Esophagus muscularis mucosa (tissue), 4 donors: ENCODE measurements at regions of chr6 and their contacts with region 1.

Region 1: DNA sequence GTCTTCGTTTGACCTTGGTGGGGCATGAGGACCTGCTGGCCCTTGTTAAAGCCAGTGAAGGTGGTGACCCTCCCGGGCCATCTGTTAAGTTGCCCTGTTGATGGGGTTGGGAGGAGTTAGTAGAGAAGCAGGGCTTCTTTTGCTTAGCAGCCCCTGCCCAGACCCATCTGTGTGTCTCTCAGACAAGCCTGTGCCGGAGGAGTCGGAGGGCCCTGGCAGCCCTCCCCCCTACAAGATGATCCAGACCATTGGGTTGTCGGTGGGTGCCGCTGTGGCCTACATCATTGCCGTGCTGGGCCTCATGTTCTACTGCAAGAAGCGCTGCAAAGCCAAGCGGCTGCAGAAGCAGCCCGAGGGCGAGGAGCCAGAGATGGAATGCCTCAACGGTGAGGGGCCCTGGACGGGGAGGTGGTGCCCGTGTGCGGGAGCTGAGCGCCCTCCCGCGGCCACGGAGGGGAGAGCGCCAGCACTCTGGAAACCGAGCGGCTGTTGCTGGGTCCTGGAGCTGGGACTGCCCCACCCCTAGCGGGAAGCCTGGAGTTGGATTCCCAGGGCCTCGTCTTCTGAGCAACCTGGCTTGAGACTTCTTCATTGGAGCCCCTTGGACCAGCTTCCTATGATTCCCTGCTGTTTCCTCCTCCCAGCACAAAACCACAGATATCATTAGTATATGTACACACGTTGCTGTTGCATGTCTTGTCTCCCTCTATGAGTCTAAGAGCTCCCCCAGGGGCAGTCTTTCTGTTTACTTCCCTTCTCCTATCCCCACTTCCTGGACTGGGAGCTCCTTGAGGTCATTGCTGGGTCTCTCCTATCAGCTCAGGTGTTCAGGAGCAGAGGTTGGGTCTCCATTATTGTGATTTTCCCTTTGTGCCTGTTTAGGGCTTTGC is 27.6 kb upstream of the SRF start:
- DNase-seq: peak; percentile 94
- H3K4me3 ChIP-seq: no peak overlapping the region
- H3K27ac ChIP-seq: peak overlapping the region in 3 of 4 donors; percentile 2 to 64 (median 7)
- H3K4me1 ChIP-seq: peaks cover 10 to 14% (median 13%) of the 10 kb centered on the region in 4 donors
- H3K27me3 ChIP-seq: no peaks in the 10 kb centered on the region
- CTCF ChIP-seq: peak; percentile 93 to 97 (median 96)
- EP300 ChIP-seq: no peak
- POLR2A ChIP-seq: no peak

Region 2: DNA sequence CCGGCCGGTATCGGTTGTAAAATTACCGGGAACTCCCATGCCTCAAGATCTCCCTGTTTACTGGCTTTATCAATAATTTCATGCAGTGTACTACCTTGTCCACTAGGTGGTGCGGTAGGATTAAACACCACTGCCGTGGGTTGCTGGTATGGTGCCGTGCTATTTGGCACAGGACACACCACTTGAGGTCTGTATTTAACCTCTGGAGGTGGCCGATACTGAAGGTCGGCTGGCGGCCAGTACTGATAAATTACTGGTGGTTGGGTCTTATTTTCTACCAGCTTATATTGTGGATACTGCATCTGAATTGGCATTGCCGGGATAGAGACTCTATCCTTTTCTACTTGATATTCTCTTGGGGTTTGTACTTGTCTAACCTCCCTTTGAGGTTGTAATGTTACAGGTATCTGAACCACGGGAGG is 241.9 kb before region 1 on chr6:
- intact Hi-C with region 1: loop called (anchors 2 kb)
- DNase-seq: peak; percentile 94
- H3K4me3 ChIP-seq: peak overlapping the region in 1 of 4 donors; percentile 27
- H3K27ac ChIP-seq: no peak overlapping the region
- H3K4me1 ChIP-seq: peaks cover 9 to 12% (median 12%) of the 10 kb centered on the region in 4 donors
- H3K27me3 ChIP-seq: no peaks in the 10 kb centered on the region
- CTCF ChIP-seq: peak; percentile 90 to 93 (median 91)
- EP300 ChIP-seq: no peak
- POLR2A ChIP-seq: no peak

Region 3: GRCh38 chr6:43013843-43014433 is 129.5 kb before region 1 on chr6 and contains the starts of genes KLHDC3 and MEA1:
- intact Hi-C with region 1: loop called (anchors 5 kb)
- DNase-seq: peak; percentile 100
- H3K4me3 ChIP-seq: peak within 1 kb of the TSS; percentile 77 to 84 (median 81)
- H3K27ac ChIP-seq: peak within 1 kb of the TSS; percentile 85 to 87 (median 86)
- H3K4me1 ChIP-seq: peaks cover 46 to 58% (median 53%) of the 10 kb centered on the region in 4 donors
- H3K27me3 ChIP-seq: no peaks in the 10 kb centered on the region
- CTCF ChIP-seq: peak in 1 of 3 experiments; percentile 20
- EP300 ChIP-seq: no peak
- POLR2A ChIP-seq: no peak
- total RNA-seq, gene KLHDC3: 88.0 to 175 (median 98.1) TPM
- total RNA-seq, gene MEA1: 51.5 to 71.2 (median 62.8) TPM

Region 4: DNA sequence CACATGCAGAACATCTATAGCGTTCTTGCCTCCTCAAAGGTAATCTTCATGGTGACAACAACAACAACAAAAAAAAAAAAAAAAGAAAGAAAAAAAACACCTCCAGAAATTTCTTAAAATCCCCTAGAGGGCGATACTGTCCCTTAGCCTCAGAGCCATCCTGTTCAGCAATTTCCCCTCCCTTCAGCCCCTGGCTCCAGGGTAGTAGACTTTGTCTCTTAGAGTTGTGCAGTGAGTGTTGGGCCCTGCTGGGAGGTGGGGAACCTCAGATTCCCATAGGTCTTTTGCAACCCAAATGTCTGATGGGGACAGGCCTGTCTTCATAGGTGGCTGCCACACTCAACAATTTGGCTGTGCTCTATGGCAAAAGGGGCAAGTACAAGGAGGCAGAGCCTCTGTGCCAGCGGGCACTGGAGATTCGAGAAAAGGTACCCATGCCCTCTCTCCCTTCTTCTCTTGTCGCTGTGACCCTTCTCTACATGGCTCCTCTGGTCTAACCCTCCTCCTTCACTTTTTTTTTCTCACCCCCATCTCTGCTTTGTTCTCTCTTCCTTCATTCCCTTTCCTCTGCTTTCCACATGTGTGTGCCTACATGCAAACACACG is 73.3 kb before region 1 on chr6:
- intact Hi-C with region 1: loop called (anchors 5 kb)
- DNase-seq: no peak
- H3K4me3 ChIP-seq: no peak overlapping the region
- H3K27ac ChIP-seq: no peak overlapping the region
- H3K4me1 ChIP-seq: peaks cover 0 to 1% (median under 1%) of the 10 kb centered on the region in 4 donors
- H3K27me3 ChIP-seq: no peaks in the 10 kb centered on the region
- CTCF ChIP-seq: peak; percentile 22 to 32 (median 23)
- EP300 ChIP-seq: no peak
- POLR2A ChIP-seq: no peak